Calu3 (cell line): ENCODE measurements at regions of chr5 and their contacts with region 1.

Region 1: DNA sequence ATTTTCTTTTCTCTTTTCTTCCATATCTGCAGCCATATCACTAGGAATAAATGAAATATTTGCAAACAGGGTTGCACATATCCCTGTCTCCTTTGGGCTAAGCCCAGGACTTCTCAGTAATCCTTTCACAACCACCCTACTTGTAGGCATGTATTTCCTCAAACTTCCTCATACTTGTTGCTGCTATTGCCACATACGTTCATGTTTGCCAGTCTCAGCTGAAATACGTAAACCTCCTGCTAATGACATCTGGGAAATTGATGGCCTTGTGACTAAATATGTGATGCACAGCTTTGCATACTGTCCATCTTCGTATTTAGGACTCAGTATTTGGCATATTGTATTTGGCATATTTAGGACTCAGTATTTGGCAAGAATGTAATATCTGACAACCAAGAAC is 224.6 kb downstream of the PLK2 start:
- DNase-seq: peak; percentile 25
- H3K4me3 Mint-ChIP-seq: no peak overlapping the region
- H3K27ac Mint-ChIP-seq: peak overlapping the region; percentile 8
- H3K4me1 Mint-ChIP-seq: peaks cover 13% of the 10 kb centered on the region
- H3K27me3 Mint-ChIP-seq: no peaks in the 10 kb centered on the region
- CTCF ChIP-seq: no peak

Region 2: DNA sequence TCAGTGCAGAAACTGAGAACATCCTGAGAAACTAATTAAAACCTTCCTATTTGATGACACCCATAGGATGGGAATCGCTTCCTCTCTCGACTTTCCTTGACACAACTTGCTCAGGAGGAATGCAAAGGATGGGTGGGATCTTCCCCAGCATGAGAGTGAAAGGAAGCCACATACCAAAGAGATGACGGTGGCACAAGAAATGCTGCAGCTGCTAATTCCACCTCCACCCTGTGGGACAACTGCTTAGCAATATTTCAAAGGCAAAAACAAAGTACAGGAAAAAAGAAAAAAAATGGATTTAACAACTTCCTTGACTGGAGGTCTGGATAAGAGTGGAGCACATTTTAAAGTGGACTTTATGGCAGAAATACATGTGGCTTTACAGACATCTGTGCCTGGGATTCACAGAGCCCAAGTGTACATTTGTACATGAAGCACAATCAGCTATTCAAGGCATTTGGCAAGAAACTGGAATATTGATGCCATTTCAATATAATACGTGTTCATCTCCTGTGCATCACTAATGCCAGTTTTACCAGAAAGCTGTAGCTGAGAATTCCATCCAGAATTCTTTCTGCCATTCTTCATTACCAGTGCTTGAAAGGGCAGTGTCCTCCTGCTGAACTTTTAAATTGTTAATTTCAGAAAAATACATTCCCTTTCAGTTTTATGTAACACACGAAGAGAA is 393.5 kb before region 1 on chr5:
- CTCF ChIA-PET with region 1: no interaction called
- intact Hi-C with region 1: no loop called
- DNase-seq: peak; percentile 50
- H3K4me3 Mint-ChIP-seq: peak overlapping the region; percentile 35
- H3K27ac Mint-ChIP-seq: peak overlapping the region; percentile 18
- H3K4me1 Mint-ChIP-seq: peaks cover 60% of the 10 kb centered on the region
- H3K27me3 Mint-ChIP-seq: no peaks in the 10 kb centered on the region
- CTCF ChIP-seq: no peak

Region 3: GRCh38 chr5:57965351-57965750 is 269.9 kb before region 1 on chr5:
- CTCF ChIA-PET with region 1: no interaction called
- intact Hi-C with region 1: no loop called
- DNase-seq: no peak
- H3K4me3 Mint-ChIP-seq: no peak overlapping the region
- H3K27ac Mint-ChIP-seq: no peak overlapping the region
- H3K4me1 Mint-ChIP-seq: no peaks in the 10 kb centered on the region
- H3K27me3 Mint-ChIP-seq: no peaks in the 10 kb centered on the region
- CTCF ChIP-seq: no peak

Region 4: GRCh38 chr5:58107704-58108103 is 127.6 kb before region 1 on chr5:
- CTCF ChIA-PET with region 1: no interaction called
- intact Hi-C with region 1: no loop called
- DNase-seq: no peak
- H3K4me3 Mint-ChIP-seq: no peak overlapping the region
- H3K27ac Mint-ChIP-seq: no peak overlapping the region
- H3K4me1 Mint-ChIP-seq: no peaks in the 10 kb centered on the region
- H3K27me3 Mint-ChIP-seq: no peaks in the 10 kb centered on the region
- CTCF ChIP-seq: no peak

Region 5: DNA sequence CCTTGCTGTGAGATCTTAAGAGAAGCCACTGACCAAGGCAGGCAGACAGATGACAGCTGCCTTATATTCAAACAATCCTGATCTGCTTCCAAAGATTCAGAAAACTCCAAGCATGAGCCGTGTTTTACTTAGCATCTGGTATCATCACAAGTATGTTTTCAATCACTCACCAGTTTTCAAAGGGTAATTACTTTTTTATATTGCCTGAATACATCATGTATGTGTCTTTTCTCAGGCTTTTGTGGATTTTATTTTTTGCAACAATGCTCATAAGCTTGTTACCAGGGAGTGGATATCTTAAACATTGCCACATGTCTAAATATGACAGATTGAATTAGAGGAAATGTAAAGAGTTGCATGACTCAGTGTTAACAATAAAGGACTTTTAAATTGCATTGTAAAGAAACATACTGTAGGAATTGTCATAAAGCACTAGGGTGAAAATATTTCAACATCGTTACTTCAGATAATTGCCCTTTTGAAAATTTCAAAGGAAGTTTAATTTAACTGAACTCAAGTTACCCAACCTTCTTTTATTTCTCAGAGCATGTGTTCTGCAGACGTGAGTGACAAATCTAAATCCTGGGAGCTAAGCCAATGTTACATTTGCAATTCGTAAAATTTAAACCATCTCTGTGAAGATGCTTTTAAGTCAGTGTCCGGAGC is 101.5 kb before region 1 on chr5:
- CTCF ChIA-PET with region 1: no interaction called
- intact Hi-C with region 1: loop called (anchors 10 kb)
- DNase-seq: no peak
- H3K4me3 Mint-ChIP-seq: no peak overlapping the region
- H3K27ac Mint-ChIP-seq: no peak overlapping the region
- H3K4me1 Mint-ChIP-seq: no peaks in the 10 kb centered on the region
- H3K27me3 Mint-ChIP-seq: no peaks in the 10 kb centered on the region
- CTCF ChIP-seq: no peak